Naive thymus-derived CD4-positive, alpha-beta T cell (primary cell): ENCODE measurements at regions of chr4 and their contacts with region 1.

Region 1: GRCh38 chr4:25913851-25914669 is at the start of gene SMIM20:
- DNase-seq: peak; percentile 84 to 92 (median 90)
- ATAC-seq: peak; percentile 98
- H3K4me3 ChIP-seq: peak within 1 kb of the TSS; percentile 86
- H3K4me3 Mint-ChIP-seq: peak within 1 kb of the TSS; percentile 88 to 99 (median 96)
- H3K27ac ChIP-seq: peak within 1 kb of the TSS; percentile 82
- H3K27ac Mint-ChIP-seq: peak within 1 kb of the TSS; percentile 95 to 99 (median 98)
- H3K4me1 ChIP-seq: peaks cover 11 to 16% of the 10 kb centered on the region in 2 donors
- H3K4me1 Mint-ChIP-seq: peaks cover 13 to 27% (median 19%) of the 10 kb centered on the region in 7 donors
- H3K27me3 ChIP-seq: no peaks in the 10 kb centered on the region
- H3K27me3 Mint-ChIP-seq: peaks cover 0 to 7% (median 0%) of the 10 kb centered on the region in 5 donors
- total RNA-seq, gene SMIM20: 11.6 to 22.8 (median 14.5) TPM

Region 2: GRCh38 chr4:25234390-25235370 is 679.4 kb before region 1 on chr4:
- CTCF ChIA-PET with region 1: no interaction called
- POLR2A ChIA-PET with region 1: no interaction called
- intact Hi-C with region 1: loop called in 1 of 2 experiments (anchors 1 kb)
- DNase-seq: peak; percentile 20 to 76 (median 64)
- ATAC-seq: peak; percentile 70
- H3K4me3 ChIP-seq: peak overlapping the region; percentile 80
- H3K4me3 Mint-ChIP-seq: peak overlapping the region; percentile 86 to 99 (median 94)
- H3K27ac ChIP-seq: peak overlapping the region; percentile 89
- H3K27ac Mint-ChIP-seq: peak overlapping the region; percentile 89 to 98 (median 95)
- H3K4me1 ChIP-seq: peaks cover 16 to 29% of the 10 kb centered on the region in 2 donors
- H3K4me1 Mint-ChIP-seq: peaks cover 16 to 57% (median 44%) of the 10 kb centered on the region in 7 donors
- H3K27me3 ChIP-seq: no peaks in the 10 kb centered on the region
- H3K27me3 Mint-ChIP-seq: no peaks in the 10 kb centered on the region

Region 3: DNA sequence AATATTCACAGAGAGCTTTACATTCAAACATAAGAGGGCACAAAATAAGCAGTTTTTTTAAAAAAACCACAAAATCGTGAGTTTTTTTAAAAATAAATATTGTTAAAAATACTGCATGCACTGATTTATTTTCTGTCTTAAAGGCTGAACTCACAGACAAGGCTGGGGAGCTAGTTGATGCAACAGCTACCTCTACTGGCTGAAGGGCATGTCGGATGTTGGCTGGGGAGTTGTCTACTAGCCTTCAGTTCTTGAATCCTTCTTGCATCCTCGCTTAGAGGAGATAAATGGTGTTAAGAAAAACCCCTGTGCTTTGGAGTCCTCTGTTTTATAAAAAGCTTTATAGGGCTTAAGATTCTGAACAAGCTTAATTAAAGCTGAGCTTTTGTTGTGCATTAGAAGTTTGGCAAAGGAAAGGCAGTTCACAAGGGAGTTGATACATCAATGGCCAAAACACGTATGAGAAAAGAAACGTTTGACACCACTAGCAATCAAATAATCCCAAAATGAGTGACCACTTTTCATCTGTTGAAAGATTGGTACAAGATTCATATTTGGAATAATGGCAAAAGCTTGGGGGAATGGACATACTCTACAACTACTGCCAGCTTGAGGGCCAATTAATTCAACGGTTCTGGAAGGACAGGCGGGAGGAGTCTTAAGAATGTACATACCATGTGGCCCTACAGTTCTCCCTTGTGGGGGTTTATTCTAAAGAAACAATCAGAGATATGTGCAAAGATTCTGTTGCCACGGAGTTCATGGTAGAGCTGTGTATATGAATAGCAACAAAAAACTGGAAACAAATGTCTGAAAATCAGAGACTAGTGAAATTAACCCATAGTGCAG is 146.0 kb before region 1 on chr4:
- CTCF ChIA-PET with region 1: no interaction called
- POLR2A ChIA-PET with region 1: no interaction called
- intact Hi-C with region 1: loop called in 1 of 2 experiments (anchors 10 kb)
- DNase-seq: no peak
- ATAC-seq: peak; percentile 64
- H3K4me3 ChIP-seq: no peak overlapping the region
- H3K4me3 Mint-ChIP-seq: no peak overlapping the region
- H3K27ac ChIP-seq: no peak overlapping the region
- H3K27ac Mint-ChIP-seq: peak overlapping the region in 1 of 9 donors; percentile 38
- H3K4me1 ChIP-seq: no peaks in the 10 kb centered on the region
- H3K4me1 Mint-ChIP-seq: peaks cover 0 to 2% (median 0%) of the 10 kb centered on the region in 7 donors
- H3K27me3 ChIP-seq: no peaks in the 10 kb centered on the region
- H3K27me3 Mint-ChIP-seq: no peaks in the 10 kb centered on the region

Region 4: DNA sequence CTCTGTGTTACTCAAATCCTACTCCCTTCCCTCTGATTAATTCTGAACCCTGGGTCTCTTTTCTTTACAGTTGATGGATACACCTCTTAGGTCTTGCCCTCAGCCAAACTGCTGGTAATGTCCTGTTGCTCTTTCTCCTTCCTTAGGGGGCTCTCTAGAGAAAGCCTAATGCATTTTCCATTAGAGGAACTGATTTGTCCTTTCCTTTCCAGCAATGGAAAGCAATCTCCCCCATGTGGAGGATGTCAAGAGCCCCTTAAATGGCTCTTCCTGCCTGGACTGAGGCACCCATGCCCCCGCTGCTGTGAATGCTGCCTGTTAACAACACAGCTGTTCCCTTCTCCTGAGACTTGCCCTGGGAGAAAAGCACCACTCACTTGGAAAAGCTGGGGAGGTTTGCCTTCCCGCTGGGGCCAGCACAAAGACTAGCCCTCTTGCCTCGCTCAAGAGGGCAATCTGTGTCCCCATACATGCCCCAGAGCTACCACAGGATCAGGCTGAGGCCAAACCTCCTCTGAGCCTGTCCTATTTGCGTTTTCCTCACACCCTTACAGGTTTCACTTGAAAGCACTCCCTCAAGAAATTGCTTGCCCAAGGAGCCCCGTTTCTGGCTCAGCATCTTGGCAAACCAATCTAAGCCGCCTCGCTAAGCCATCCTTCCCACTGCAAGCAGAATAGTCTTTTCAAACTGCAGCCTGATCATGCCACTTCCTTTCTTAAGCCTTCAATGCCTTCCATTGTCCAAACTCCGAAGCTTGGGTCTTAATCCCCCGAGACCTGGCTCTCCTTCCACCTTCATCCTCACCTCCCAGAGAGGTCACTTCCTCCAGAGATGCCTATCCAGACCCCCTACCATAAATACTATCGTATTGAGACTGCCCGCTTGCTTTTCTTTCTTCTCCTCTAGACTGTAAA is 23.2 kb before region 1 on chr4:
- CTCF ChIA-PET with region 1: no interaction called
- POLR2A ChIA-PET with region 1: interaction called, 4 read pairs
- intact Hi-C with region 1: loop called in 1 of 2 experiments (anchors 1 kb)
- DNase-seq: no peak
- ATAC-seq: no peak
- H3K4me3 ChIP-seq: no peak overlapping the region
- H3K4me3 Mint-ChIP-seq: no peak overlapping the region
- H3K27ac ChIP-seq: no peak overlapping the region
- H3K27ac Mint-ChIP-seq: no peak overlapping the region
- H3K4me1 ChIP-seq: no peaks in the 10 kb centered on the region
- H3K4me1 Mint-ChIP-seq: peaks cover 0 to 6% (median 2%) of the 10 kb centered on the region in 7 donors
- H3K27me3 ChIP-seq: no peaks in the 10 kb centered on the region
- H3K27me3 Mint-ChIP-seq: peaks cover 0 to 3% (median 0%) of the 10 kb centered on the region in 5 donors

Region 5: GRCh38 chr4:26319467-26319948 is 405.4 kb after region 1 on chr4:
- CTCF ChIA-PET with region 1: no interaction called
- POLR2A ChIA-PET with region 1: no interaction called
- intact Hi-C with region 1: loop called (anchors 1 kb)
- DNase-seq: peak; percentile 88 to 96 (median 94)
- ATAC-seq: peak; percentile 77
- H3K4me3 ChIP-seq: peak overlapping the region; percentile 89
- H3K4me3 Mint-ChIP-seq: peak overlapping the region; percentile 89 to 100 (median 96)
- H3K27ac ChIP-seq: peak overlapping the region; percentile 84
- H3K27ac Mint-ChIP-seq: peak overlapping the region; percentile 92 to 100 (median 96)
- H3K4me1 ChIP-seq: peaks cover 10 to 14% of the 10 kb centered on the region in 2 donors
- H3K4me1 Mint-ChIP-seq: peaks cover 34 to 43% (median 36%) of the 10 kb centered on the region in 7 donors
- H3K27me3 ChIP-seq: no peaks in the 10 kb centered on the region
- H3K27me3 Mint-ChIP-seq: no peaks in the 10 kb centered on the region

Region 6: GRCh38 chr4:27010334-27010940 is 1096.4 kb after region 1 on chr4:
- CTCF ChIA-PET with region 1: no interaction called
- POLR2A ChIA-PET with region 1: no interaction called
- intact Hi-C with region 1: loop called in 1 of 2 experiments (anchors 10 kb)
- DNase-seq: peak; percentile 17 to 67 (median 52)
- ATAC-seq: peak; percentile 89
- H3K4me3 ChIP-seq: no peak overlapping the region
- H3K4me3 Mint-ChIP-seq: no peak overlapping the region
- H3K27ac ChIP-seq: no peak overlapping the region
- H3K27ac Mint-ChIP-seq: peak overlapping the region in 7 of 9 donors; percentile 6 to 91 (median 71)
- H3K4me1 ChIP-seq: no peaks in the 10 kb centered on the region
- H3K4me1 Mint-ChIP-seq: peaks cover 6 to 25% (median 14%) of the 10 kb centered on the region in 7 donors
- H3K27me3 ChIP-seq: no peaks in the 10 kb centered on the region
- H3K27me3 Mint-ChIP-seq: no peaks in the 10 kb centered on the region